GM13977 (cell line): ENCODE measurements at regions of chr10 and their contacts with region 1.

Region 1: DNA sequence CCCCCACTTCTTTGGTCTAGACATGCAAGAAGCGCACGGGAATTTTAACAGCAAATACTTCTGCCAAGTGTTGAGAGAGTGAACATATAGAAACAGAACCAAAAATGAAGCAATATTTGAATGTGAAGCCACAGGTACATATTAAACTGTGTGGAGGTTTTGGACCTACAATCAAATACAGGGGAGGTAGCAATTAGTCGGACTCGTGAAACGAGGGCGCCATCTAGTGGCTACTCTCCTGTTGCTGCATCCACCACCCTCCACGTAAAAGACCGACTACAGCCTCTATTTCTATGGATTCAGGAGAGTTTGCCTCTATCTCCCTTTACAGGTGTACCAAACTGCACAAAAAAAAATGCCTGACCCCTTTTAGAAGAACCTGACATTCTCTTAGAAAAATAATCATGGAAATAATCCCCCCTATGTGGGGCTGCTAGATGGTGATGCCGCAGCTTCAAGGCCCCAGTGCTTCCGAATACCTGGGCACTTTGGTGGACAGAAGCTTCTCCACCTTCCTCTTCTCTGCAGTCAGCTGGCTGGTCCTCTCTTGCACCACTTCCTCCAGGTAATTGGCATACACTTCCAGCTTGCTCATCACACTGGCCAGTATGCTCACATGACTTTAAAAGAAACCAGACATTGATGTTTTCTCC is 31.7 kb downstream of the TECTB start:
- DNase-seq: peak; percentile 72
- CTCF ChIP-seq: peak; percentile 86

Region 2: DNA sequence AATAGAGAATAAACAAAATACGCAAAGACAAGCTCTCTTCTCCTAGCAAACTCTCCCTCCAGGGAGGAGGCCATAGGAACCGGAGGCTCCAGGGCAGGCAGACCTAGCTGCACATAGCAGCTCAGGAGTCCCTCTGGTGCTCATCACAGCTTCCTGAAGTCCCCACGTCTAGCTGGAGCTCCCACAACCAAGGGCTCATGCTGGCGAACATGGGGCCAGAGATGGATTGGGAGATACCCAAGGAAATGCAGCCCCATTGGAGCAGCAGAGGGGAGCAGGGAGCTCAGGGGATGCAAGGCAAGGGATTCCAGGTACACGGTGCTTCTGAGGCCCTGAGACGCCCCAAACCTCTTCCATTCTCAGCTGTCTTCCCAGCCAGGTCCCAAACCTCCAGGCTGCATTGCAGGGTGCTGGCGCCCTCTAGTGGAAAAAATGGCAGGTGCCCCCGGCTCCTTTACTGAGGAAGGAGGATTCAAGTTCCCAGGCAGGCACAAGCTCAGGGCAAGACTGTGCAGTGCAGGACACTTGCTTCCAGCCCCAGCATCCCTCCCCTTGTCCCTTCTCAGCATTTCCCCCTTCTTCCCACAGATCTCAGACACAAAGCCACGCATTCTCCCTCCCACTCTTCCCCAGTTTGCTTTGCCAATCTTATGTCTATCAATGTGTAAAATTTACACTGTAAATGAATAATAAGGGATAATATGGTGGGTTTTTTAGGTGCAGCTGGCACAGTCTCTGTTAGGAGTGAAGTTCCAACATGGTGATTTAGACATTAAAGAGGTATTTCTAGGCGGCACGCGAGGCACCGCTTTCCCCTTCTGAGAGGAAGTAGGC is 177.6 kb before region 1 on chr10:
- in situ Hi-C with region 1: loop called (anchors 10 kb)
- DNase-seq: peak; percentile 76
- CTCF ChIP-seq: peak; percentile 95

Region 3: GRCh38 chr10:112969542-112969941 is 654.6 kb after region 1 on chr10:
- in situ Hi-C with region 1: no loop called
- DNase-seq: no peak
- CTCF ChIP-seq: no peak